Motor neuron (in vitro differentiated cells): ENCODE measurements at regions of chr19 and their contacts with region 1.

Region 1: DNA sequence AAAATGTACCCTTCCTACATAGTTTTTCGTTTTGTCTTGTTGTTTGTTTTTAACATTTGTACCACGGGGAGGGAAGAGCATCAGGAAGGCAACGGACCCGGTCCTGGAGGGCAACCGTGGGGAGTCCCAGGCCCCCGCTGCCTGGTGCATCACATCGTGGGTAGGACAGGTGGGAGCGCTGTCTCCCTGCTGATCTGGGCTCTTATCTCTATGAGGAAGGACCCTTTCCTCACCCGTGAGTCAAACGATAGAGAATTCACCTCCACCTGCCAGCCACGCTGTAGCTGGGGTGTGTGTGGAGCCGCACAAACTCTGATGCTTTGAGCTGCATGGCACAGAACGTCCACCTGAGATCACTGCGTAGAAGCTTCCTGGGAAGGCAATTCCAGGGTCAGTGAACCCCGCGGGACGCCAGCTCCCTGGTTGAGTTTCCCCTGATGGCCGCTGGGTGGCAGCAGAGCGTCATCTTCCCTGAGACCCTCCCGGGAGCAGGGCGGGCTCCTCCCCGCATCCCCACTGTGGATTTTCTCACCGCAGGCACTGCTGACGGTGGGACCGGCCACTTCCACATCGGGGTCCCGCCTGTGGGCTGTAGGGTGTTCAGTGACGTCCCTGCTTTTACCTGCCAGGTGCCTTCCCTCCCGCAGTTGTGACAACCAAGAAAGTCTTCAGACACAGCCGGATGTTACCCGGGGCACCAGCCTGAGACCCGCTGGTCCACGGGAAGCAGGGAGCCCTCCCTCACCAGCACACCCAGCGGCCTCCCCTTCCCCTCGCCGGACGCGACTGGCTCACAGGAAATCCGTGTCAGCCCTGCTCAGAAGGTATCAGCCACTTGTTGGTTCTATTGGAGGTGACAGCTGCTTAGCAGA is 54.7 kb downstream of the ZNF787 start:
- ATAC-seq: peak; percentile 84 to 99 (median 98)
- H3K4me3 ChIP-seq: peak overlapping the region; percentile 6 to 40 (median 28)
- H3K27ac ChIP-seq: no peak overlapping the region
- H3K4me1 ChIP-seq: no peaks in the 10 kb centered on the region

Region 2: DNA sequence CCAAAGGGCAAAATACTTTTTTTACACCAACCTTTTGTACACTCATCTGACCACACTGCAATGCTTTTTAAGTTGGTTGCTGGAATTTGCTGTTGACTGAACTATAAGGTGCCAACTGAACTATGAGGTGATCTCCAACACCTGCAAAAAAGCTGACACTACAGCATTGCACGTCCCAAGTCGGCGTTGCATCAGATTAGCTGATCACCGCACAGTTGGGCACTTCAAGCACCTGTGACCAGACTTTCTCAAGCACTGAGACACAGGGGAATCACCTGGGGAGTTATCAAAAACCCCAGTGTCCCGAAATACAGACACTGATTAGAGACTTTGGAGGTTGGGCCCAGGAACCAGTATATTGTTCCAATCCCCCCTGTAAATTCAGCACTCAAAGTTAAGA is 235.7 kb before region 1 on chr19:
- in situ Hi-C with region 1: no loop called
- ATAC-seq: no peak
- H3K4me3 ChIP-seq: no peak overlapping the region
- H3K27ac ChIP-seq: no peak overlapping the region
- H3K4me1 ChIP-seq: no peaks in the 10 kb centered on the region

Region 3: GRCh38 chr19:56333505-56333904 is 267.1 kb after region 1 on chr19:
- in situ Hi-C with region 1: loop called in 1 of 9 experiments (anchors 25 kb)
- ATAC-seq: peak in 3 of 8 experiments; percentile 73 to 85 (median 84)
- H3K4me3 ChIP-seq: no peak overlapping the region
- H3K27ac ChIP-seq: no peak overlapping the region
- H3K4me1 ChIP-seq: no peaks in the 10 kb centered on the region

Region 4: GRCh38 chr19:56367829-56368711 is 301.7 kb after region 1 on chr19:
- in situ Hi-C with region 1: loop called in 2 of 9 experiments (anchors 25 kb)
- ATAC-seq: peak; percentile 95 to 99 (median 98)
- H3K4me3 ChIP-seq: peak overlapping the region; percentile 52 to 94 (median 56)
- H3K27ac ChIP-seq: peak overlapping the region; percentile 82 to 86
- H3K4me1 ChIP-seq: peaks cover 2 to 10% of the 10 kb centered on the region in 2 donors

Region 5: GRCh38 chr19:56491399-56491798 is 425.0 kb after region 1 on chr19:
- in situ Hi-C with region 1: no loop called
- ATAC-seq: no peak
- H3K4me3 ChIP-seq: no peak overlapping the region
- H3K27ac ChIP-seq: no peak overlapping the region
- H3K4me1 ChIP-seq: no peaks in the 10 kb centered on the region